Natural killer cell (primary cell): ENCODE measurements at regions of chr1 and their contacts with region 1.

Region 1: GRCh38 chr1:16122916-16123315 is 33.0 kb downstream of the EPHA2 start:
- DNase-seq: peak; percentile 77 to 80
- ATAC-seq: peak; percentile 80 to 89 (median 82)
- H3K4me3 ChIP-seq: no peak overlapping the region
- H3K4me3 Mint-ChIP-seq: peak overlapping the region; percentile 85
- H3K27ac ChIP-seq: peak overlapping the region; percentile 46
- H3K27ac Mint-ChIP-seq: peak overlapping the region; percentile 86 to 87
- H3K4me1 ChIP-seq: peaks cover 36% of the 10 kb centered on the region
- H3K4me1 Mint-ChIP-seq: peaks cover 40 to 57% of the 10 kb centered on the region in 2 donors
- H3K27me3 ChIP-seq: no peaks in the 10 kb centered on the region
- H3K27me3 Mint-ChIP-seq: peaks cover 0 to 6% of the 10 kb centered on the region in 2 donors
- CTCF ChIP-seq: no peak

Region 2: GRCh38 chr1:16155532-16156410 is 32.9 kb after region 1 on chr1 and contains the start of gene EPHA2:
- intact Hi-C with region 1: loop called (anchors 5 kb)
- DNase-seq: peak in 1 of 2 donors; percentile 40
- ATAC-seq: peak in 2 of 3 donors; percentile 38 to 43
- H3K4me3 ChIP-seq: no peak within 1 kb of the TSS
- H3K4me3 Mint-ChIP-seq: peak within 1 kb of the TSS; percentile 74
- H3K27ac ChIP-seq: no peak within 1 kb of the TSS
- H3K27ac Mint-ChIP-seq: no peak within 1 kb of the TSS
- H3K4me1 ChIP-seq: peaks cover 53% of the 10 kb centered on the region
- H3K4me1 Mint-ChIP-seq: peaks cover 21 to 53% of the 10 kb centered on the region in 2 donors
- H3K27me3 ChIP-seq: peaks cover 39% of the 10 kb centered on the region
- H3K27me3 Mint-ChIP-seq: peaks cover 0 to 22% of the 10 kb centered on the region in 2 donors
- CTCF ChIP-seq: no peak
- total RNA-seq, gene EPHA2: 0.13 TPM in 1 of 3 donors, not detected in the others

Region 3: DNA sequence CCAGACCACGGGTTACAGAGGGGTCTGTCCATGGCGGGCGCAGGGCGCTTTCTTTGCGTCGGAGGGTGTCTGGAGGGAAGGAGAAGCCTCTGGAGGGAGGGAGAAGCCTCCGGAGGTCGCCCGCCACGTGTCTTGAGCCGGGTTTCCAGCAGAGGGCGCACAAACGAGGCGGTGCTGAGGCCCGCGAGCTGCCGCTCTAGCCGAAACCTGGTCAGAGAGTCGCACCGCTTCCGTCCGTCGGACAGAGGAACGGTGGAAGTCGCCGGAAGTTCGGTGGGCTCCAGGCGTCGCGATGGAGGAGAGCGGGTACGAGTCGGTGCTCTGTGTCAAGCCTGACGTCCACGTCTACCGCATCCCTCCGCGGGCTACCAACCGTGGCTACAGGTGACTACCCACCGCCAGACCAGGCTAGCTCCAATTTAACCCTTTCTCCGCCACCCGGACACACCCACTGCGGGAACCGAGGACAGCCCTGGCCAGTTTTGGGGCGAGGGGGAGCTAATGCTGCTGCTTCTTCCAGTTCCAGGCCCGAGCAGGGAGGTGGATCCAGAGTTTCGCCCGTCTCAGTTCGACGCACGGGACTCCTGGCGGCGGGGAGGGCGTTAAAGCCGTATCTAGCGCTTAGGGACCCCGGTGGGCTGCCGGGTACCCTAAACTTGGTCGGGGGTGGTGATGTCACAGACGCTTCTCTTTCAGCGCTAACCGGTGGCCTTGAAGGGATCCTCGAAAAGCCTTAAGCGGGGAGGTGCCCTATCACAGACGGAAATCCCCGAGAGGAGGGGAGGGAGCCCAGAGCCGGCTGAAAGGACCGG is 317.8 kb after region 1 on chr1 and contains the start of gene NECAP2:
- intact Hi-C with region 1: no loop called
- DNase-seq: peak; percentile 95
- ATAC-seq: peak; percentile 86 to 97 (median 92)
- H3K4me3 ChIP-seq: peak within 1 kb of the TSS; percentile 100
- H3K4me3 Mint-ChIP-seq: peak within 1 kb of the TSS; percentile 92
- H3K27ac ChIP-seq: peak within 1 kb of the TSS; percentile 98
- H3K27ac Mint-ChIP-seq: peak within 1 kb of the TSS; percentile 94 to 96
- H3K4me1 ChIP-seq: peaks cover 36% of the 10 kb centered on the region
- H3K4me1 Mint-ChIP-seq: peaks cover 18 to 29% of the 10 kb centered on the region in 2 donors
- H3K27me3 ChIP-seq: no peaks in the 10 kb centered on the region
- H3K27me3 Mint-ChIP-seq: no peaks in the 10 kb centered on the region
- CTCF ChIP-seq: peak; percentile 91
- total RNA-seq, gene NECAP2: 62.1 to 73.1 (median 73.0) TPM